SK-N-SH (cell line): ENCODE measurements at regions of chr17 and their contacts with region 1.

Region 1: DNA sequence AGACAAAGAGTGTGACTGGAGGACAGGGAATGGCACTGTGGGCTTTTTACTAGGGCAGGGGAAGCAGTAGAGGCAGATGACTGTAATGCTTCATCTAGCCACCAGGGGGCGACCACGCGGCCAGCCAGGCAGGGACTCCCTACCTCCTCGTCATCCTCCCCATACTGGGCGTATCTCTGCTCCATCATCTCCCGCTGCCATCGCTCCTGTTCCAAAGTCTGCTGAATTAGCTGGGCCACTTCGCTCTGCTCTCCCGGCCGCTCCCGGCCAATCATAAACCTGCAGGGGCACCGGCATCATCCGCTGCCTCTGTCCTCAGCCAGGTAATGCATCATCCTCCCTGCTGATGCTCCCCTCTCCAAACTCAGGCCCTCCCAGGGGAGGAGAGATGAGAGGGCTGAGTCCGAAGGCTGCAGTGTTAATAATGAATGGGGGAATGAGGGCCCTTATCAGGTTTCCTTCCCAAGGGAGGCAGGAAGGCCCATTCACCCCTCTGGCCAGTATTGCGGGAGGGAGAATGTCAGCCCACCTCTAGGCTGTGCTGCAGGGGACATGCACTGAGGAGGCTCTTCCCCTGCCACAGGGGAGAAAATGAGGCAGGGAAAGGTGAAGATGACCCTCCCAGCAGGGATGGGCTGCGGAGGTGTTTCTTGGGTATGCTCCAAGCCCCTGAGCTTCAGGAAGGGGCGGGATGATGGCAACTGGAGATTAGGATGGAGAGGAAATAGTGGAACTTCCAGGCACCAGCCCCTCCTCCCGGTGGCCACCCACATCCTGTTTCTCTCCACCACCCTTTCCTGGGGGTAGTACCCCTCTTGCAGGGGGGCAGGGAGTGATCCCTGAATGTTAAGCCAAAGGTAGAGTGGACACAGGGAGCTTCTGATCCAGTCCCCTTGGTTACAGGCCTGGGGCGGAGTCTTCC is 10.3 kb upstream of the SAMD14 start:
- DNase-seq: peak; percentile 98
- H3K4me3 ChIP-seq: no peak overlapping the region; a peak in 1 of 4 replicates
- H3K27ac ChIP-seq: peak overlapping the region in 1 of 2 experiments; percentile 40; a peak in 2 of 4 replicates
- H3K4me1 ChIP-seq: peaks cover 0 to 7% of the 10 kb centered on the region in 2 experiments; a peak in 1 of 4 replicates
- H3K27me3 ChIP-seq: no peaks in the 10 kb centered on the region
- CTCF ChIP-seq: peak; percentile 96
- EP300 ChIP-seq: peak in 1 of 2 experiments; percentile 27; a peak in 1 of 4 replicates
- RAD21 ChIP-seq: peak; percentile 82

Region 2: GRCh38 chr17:49887086-49888028 is 252.9 kb before region 1 on chr17:
- CTCF ChIA-PET with region 1: no interaction called
- POLR2A ChIA-PET with region 1: no interaction called
- DNase-seq: no peak
- H3K4me3 ChIP-seq: no peak overlapping the region
- H3K27ac ChIP-seq: no peak overlapping the region
- H3K4me1 ChIP-seq: peaks cover 0 to 6% of the 10 kb centered on the region in 2 experiments; a peak in 1 of 4 replicates
- H3K27me3 ChIP-seq: peaks cover 83% of the 10 kb centered on the region
- CTCF ChIP-seq: no peak
- EP300 ChIP-seq: no peak
- RAD21 ChIP-seq: no peak

Region 3: DNA sequence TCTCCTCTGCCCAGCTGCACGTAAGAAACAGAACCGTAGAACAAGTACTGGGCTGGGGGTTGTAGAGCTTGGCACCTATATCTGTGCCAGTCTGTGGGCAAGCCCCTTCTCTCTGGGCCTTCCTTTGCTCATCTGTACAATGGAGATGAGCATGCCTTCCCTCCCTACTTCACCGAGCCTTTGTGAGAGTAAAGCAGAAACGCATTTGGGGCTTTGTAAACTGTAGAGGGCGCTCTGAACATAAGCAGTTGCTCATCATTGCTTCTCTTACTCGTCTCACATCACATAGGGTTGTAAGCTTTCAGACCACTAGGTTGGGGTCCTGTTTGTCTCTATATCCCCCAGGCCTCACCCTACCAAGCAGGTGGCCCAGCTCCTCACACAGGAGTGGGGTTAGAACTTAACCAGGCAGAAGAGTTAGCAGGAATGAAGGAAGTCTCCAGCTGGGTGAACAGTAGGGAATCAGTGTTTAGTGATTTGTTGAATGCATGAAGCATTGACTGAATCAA is 25.3 kb before region 1 on chr17:
- CTCF ChIA-PET with region 1: interaction called, 23 read pairs
- POLR2A ChIA-PET with region 1: no interaction called
- DNase-seq: peak; percentile 79
- H3K4me3 ChIP-seq: no peak overlapping the region
- H3K27ac ChIP-seq: no peak overlapping the region
- H3K4me1 ChIP-seq: peaks cover 0 to 24% of the 10 kb centered on the region in 2 experiments; a peak in 1 of 4 replicates
- H3K27me3 ChIP-seq: no peaks in the 10 kb centered on the region
- CTCF ChIP-seq: peak; percentile 93
- EP300 ChIP-seq: no peak
- RAD21 ChIP-seq: peak; percentile 75

Region 4: GRCh38 chr17:50129728-50130558 is 10.3 kb before region 1 on chr17 and contains the start of gene SAMD14:
- CTCF ChIA-PET with region 1: interaction called, 169 read pairs
- POLR2A ChIA-PET with region 1: interaction called, 5 read pairs
- DNase-seq: peak; percentile 96
- H3K4me3 ChIP-seq: peak within 1 kb of the TSS; percentile 61 to 70
- H3K27ac ChIP-seq: peak within 1 kb of the TSS in 1 of 2 experiments; percentile 69; a peak in 1 of 4 replicates
- H3K4me1 ChIP-seq: peaks cover 20 to 23% of the 10 kb centered on the region in 2 experiments; a peak in 3 of 4 replicates
- H3K27me3 ChIP-seq: no peaks in the 10 kb centered on the region
- CTCF ChIP-seq: no peak
- EP300 ChIP-seq: no peak
- RAD21 ChIP-seq: no peak
- polyA plus RNA-seq, gene SAMD14: 2.8 and 3.4 TPM in 2 replicates

Region 5: DNA sequence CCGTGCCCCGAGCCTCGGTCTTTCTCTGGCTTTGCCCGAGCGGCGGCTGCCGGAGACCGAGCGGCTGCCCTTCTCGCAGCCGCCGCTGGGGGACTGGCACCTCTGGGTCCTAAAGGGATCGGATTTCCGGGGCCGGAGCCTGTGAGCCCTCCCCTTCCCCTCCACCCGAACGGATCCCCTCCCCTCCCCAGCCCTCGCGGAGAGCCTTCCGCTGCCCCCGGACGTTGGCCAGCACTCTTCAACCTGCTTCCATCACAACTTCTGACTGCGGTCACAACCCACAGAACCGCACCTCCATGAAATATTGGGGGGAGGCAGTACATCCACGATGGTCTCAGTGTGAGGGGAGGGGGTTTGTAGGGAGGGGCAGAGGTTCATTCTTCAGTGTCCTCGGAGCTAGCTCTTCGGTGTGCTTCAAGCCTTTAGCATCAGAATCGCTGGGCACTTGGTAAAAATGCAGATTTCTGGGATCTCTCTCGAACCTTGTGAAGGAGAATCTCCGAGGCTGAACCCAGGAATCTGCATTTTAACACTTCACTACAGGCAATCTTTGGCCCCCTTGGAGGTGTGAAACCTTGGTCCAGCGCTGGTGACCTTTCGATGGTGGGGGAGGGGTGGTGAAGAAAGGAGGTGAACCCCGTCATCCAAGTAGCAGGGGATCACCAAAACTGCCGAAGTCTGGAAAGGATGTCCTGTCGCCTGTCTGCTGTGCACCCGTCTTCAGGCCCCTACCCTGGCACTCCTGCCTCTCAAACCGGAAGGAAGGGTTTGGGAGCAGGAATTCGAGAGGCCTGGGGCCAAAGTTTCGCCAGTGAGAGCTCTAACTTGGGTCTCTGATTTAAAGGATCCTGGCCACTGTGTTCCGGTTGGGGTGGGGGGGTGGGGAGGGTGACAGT is 11.1 kb after region 1 on chr17:
- CTCF ChIA-PET with region 1: interaction called, 169 read pairs
- POLR2A ChIA-PET with region 1: interaction called, 6 read pairs
- DNase-seq: peak; percentile 99
- H3K4me3 ChIP-seq: peak overlapping the region; percentile 66 to 81
- H3K27ac ChIP-seq: peak overlapping the region; percentile 74 to 98
- H3K4me1 ChIP-seq: peaks cover 39 to 60% of the 10 kb centered on the region in 2 experiments; a peak in 3 of 4 replicates
- H3K27me3 ChIP-seq: no peaks in the 10 kb centered on the region
- CTCF ChIP-seq: peak; percentile 63
- EP300 ChIP-seq: peak in 1 of 2 experiments; percentile 34; a peak in 1 of 4 replicates
- RAD21 ChIP-seq: peak; percentile 19; the same call in 1 of the 2 replicates

Region 6: DNA sequence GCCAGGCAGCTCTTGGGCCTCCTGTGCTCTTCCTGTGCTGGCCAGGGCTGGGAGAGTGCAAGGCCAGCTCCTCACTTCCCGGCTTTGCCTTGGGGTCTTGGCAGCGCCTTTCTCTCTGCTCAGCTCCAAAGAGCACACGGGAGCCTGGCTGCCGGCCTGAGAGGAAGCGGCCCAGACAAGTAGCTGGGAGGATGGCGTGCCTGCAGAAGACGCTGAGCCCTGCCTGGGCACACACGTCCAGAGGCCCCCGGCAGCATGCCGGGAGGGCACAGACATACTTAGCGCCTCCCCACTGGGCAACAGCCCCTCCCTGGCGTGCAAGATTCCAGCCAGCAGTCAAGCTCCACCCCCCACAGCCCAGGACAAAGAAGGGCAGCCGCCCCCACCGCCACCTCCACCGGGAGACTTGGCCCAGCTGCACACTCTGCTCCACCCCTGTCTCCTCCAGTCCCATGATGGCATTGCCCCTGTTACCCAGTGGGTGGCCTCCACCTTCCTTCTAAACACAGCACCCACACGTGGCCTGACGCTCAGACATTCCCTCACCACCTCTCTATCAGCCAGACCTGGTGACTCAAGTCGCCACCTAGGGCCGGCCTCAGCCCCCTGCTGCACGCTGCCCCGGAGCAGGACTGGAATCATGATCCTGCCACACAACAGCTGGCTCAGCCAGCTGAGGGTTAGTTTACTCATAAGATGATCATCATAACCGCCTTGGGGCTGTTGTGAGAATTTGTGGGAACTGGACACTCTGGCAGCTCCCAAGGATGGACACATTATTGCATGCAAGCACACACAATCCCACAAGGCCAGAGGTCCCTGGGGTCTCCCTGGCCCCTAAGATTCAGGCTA is 38.0 kb after region 1 on chr17:
- CTCF ChIA-PET with region 1: interaction called, 21 read pairs
- POLR2A ChIA-PET with region 1: no interaction called
- DNase-seq: peak; percentile 93
- H3K4me3 ChIP-seq: peak overlapping the region in 1 of 2 experiments; percentile 15; a peak in 1 of 4 replicates
- H3K27ac ChIP-seq: peak overlapping the region; percentile 94 to 100
- H3K4me1 ChIP-seq: peaks cover 29 to 52% of the 10 kb centered on the region in 2 experiments; a peak in 3 of 4 replicates
- H3K27me3 ChIP-seq: no peaks in the 10 kb centered on the region
- CTCF ChIP-seq: peak; percentile 77
- EP300 ChIP-seq: peak; percentile 27 to 36; a peak in 2 of 4 replicates
- RAD21 ChIP-seq: peak; percentile 53

Region 7: GRCh38 chr17:50221864-50222545 is 81.8 kb after region 1 on chr17:
- CTCF ChIA-PET with region 1: no interaction called
- POLR2A ChIA-PET with region 1: no interaction called
- DNase-seq: no peak
- H3K4me3 ChIP-seq: no peak overlapping the region
- H3K27ac ChIP-seq: peak overlapping the region; percentile 44 to 100; a peak in 3 of 4 replicates
- H3K4me1 ChIP-seq: peaks cover 7 to 50% of the 10 kb centered on the region in 2 experiments
- H3K27me3 ChIP-seq: no peaks in the 10 kb centered on the region
- CTCF ChIP-seq: no peak
- EP300 ChIP-seq: peak in 1 of 2 experiments; percentile 39; a peak in 1 of 4 replicates
- RAD21 ChIP-seq: no peak

Region 8: DNA sequence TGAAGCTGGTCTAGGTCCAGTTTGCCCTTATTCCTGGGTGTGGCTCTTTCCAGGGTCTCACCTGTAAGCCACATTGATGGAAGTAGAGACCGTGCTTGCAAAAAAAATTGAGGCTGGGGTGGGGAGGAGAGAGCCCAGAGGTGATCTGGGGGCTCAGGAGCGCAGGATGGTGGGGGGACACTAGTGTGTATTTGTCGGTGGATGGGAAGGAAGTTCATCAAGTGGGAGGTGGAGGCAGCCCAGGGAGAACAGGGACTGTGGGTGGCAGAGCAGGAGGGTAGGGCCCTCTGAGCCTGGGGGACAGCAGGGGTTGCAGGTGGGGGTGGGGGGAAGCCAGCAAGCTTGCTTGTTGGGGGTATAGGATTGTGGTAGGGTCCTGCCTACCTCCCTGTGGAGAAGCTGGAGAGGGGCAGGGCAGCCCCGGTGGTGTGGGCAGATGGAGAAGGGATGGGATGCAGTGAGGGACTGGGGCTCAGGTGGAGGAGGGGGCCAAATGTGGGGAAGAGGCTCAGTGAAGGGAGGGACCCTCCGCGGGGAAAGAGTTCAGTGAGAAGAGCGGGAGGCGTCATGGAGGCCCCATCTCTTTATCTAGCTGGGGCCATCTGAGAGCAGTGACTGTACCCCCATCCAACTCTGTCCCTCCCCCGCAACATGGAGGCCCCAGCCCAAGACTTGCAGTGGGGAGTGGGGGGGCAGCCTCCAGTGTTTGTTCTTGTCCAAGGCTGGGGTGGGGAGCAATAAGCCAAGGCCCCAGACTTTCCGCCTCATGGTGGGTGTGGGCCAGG is 116.8 kb after region 1 on chr17:
- CTCF ChIA-PET with region 1: no interaction called
- POLR2A ChIA-PET with region 1: no interaction called
- DNase-seq: peak; percentile 30
- H3K4me3 ChIP-seq: no peak overlapping the region
- H3K27ac ChIP-seq: no peak overlapping the region
- H3K4me1 ChIP-seq: peaks cover 7 to 19% of the 10 kb centered on the region in 2 experiments; a peak in 2 of 4 replicates
- H3K27me3 ChIP-seq: no peaks in the 10 kb centered on the region
- CTCF ChIP-seq: no peak
- EP300 ChIP-seq: no peak
- RAD21 ChIP-seq: no peak

Region 9: GRCh38 chr17:50283246-50283645 is 143.0 kb after region 1 on chr17:
- CTCF ChIA-PET with region 1: no interaction called
- POLR2A ChIA-PET with region 1: no interaction called
- DNase-seq: no peak
- H3K4me3 ChIP-seq: no peak overlapping the region
- H3K27ac ChIP-seq: no peak overlapping the region
- H3K4me1 ChIP-seq: peaks cover 7 to 23% of the 10 kb centered on the region in 2 experiments; a peak in 3 of 4 replicates
- H3K27me3 ChIP-seq: no peaks in the 10 kb centered on the region
- CTCF ChIP-seq: no peak
- EP300 ChIP-seq: no peak
- RAD21 ChIP-seq: no peak